GM10248 (cell line): ENCODE measurements at regions of chr7 and their contacts with region 1.

Region 1: DNA sequence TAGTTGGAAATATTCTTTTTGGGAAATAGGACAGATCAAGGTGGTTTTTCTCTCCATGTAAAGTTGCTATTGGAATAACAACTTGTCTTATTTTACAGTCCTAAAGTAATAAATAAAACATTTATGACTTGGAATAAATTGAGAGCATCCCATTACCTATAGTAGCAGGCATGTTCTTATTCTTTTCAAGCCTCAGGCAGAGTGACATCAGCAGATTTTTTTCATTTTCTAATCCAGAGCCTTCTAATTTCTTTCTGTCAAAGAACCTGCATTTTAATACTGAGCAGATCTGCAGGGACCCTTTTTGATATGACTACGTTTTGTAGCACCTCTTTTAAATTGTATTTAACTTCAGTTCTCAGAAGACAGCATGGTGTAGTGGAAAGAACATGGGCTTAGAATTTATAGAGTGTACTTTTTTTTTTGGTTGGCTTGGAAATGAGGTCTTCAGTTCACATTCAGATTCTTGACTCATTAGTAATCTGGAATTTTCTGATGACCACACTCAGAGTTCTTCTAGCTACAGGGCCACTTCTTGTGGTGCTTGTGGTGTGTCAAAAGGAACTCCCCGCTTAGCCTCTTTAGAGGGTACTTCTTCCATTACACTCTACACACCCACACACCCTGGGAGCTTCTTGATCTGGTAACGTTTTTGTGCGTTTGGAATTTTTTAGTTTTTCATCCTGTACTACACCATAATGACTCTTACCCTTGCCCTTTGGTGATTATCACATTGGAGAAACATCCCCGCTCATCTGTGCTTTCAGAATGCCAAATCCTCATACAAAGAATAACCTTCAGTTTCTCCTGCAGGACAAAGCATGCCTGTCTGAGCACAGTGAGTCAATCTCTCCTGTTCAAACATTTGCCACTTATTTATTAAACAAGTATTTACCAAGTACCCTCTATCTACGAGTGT is 34.6 kb downstream of the AGK start:
- DNase-seq: peak; percentile 30
- CTCF ChIP-seq: no peak

Region 2: DNA sequence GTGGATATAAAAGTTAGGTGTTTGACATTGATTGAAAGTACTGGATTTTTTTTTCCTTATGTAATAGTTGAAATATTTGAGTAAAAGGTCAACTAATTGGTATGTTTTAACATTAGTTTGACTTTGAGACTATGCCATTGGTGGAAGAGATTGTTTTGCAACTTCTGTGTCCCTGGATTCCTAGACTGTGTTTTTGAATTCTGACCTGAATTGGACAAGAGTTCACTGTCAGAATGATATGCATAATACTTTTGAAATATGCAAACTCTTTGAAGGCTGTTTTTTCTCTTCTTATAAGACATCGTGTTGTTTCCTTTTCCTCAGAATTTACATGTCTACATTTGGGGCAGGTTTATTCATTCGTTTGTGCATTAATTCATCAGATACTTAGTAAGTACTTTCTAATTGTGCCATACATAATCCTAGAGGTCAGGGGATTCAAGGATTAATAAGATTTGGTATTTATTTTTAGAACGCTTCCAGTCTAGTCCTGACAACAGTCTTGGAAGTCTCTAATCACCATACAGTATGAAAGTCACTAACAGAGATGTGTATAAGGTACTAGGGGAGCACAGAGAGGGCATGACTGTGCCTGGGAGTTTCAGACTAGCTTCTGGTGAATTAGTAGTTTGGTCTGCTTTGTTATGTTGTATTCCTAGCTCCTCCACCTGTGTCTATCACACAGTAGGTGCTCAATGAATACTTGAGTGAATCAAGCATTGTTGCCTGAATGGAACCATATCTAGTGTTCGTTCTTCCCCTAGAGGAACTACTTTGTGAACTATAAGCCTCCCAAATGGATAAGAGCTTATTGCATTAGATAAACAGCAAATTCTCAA is 14.5 kb after region 1 on chr7:
- CTCF ChIA-PET with region 1: interaction called, 11 read pairs
- POLR2A ChIA-PET with region 1: no interaction called
- DNase-seq: no peak
- CTCF ChIP-seq: no peak